PC-9 (cell line): ENCODE measurements at regions of chr1 and their contacts with region 1.

Region 1: DNA sequence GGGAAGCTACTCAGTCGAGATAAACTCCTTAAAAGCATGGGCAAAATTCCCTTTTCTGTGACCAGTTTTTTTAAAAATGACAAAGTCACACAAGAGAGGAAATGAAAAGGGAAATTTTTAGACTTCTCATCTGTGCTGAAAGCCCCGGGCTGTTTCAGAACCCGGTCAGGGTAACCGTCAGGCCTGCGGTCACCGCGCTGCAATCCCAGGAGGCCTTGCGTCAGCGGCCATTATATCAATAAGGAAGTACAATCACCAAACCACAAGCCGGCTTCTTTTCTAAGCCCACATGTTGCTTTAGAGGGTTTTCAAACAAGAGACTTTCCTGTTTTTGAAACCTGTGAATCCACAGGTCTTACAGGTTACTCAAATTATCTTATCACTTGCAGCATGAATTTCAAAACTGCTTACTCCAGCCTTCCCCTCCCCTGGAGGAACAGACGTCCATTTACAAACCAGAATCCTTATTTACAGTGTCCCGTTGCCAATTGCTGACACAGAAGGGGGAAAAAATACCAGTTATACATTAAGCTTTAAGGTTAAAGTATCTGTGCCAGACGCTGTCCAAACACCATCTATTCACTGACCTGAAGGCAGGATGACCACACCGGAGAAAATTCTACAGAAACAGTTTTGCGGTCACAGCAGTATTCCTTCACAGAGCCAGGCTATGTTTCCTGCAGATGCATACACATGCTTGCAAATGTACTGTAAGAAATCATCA is 165.3 kb downstream of the TOMM20 start:
- DNase-seq: peak; percentile 90 to 99
- H3K4me3 ChIP-seq: peak overlapping the region; percentile 38
- H3K27ac ChIP-seq: peak overlapping the region; percentile 99
- H3K4me1 ChIP-seq: peaks cover 84% of the 10 kb centered on the region
- H3K27me3 ChIP-seq: no peaks in the 10 kb centered on the region
- CTCF ChIP-seq: no peak

Region 2: GRCh38 chr1:234564642-234565037 is 398.7 kb before region 1 on chr1:
- CTCF ChIA-PET with region 1: no interaction called
- POLR2A ChIA-PET with region 1: no interaction called
- intact Hi-C with region 1: loop called (anchors 2 kb)
- DNase-seq: peak; percentile 88 to 99
- H3K4me3 ChIP-seq: no peak overlapping the region
- H3K27ac ChIP-seq: peak overlapping the region; percentile 90
- H3K4me1 ChIP-seq: peaks cover 45% of the 10 kb centered on the region
- H3K27me3 ChIP-seq: no peaks in the 10 kb centered on the region
- CTCF ChIP-seq: no peak

Region 3: DNA sequence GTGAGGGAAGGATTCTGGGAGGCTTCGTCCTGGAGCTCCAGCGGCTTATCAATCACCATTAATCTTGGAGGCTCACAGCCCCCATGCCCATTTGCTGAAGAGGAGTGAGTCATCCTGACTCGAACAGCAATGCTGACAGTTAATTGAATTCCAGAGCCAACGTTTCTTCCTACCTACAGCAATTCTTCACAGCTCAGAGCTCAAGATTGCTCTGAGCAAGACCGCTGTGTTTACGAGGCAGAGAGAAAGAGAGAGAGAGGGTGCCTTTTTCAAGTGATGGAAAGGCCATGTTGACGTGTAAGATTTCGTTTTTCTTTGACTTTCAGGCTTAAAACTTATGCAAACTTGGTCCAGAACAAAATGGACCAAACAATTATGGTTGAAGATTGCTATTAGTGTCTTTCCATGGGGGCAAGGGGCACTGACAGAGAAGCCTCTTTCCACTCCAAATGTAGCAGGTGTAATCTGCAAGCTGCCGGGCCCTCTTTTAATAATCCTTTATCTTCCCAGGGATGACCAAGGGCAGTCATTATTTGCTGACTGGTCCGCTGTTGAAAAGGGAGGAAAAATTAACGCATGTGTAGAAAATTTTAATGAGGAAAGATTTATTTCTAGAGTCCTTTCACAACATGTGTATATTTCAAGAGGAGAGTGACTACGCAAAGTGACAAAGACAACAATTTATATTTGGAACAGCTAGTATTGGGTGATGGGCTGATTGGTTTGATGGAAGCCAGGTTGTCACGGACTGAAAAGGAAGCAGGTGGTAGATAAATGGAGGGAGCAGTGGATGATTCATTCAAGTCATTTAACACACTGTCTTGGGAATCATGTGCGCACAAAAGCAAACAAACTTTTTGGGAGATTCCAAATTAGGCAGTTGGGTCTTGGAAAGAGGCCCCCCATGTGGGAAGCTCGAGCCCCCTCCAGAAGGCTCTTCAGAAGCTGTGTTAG is 217.2 kb before region 1 on chr1:
- CTCF ChIA-PET with region 1: no interaction called
- POLR2A ChIA-PET with region 1: no interaction called
- intact Hi-C with region 1: loop called (anchors 1 kb)
- DNase-seq: peak in 1 of 2 experiments; percentile 79
- H3K4me3 ChIP-seq: no peak overlapping the region
- H3K27ac ChIP-seq: peak overlapping the region; percentile 82
- H3K4me1 ChIP-seq: peaks cover 45% of the 10 kb centered on the region
- H3K27me3 ChIP-seq: no peaks in the 10 kb centered on the region
- CTCF ChIP-seq: no peak

Region 4: GRCh38 chr1:234875953-234876855 is 87.1 kb before region 1 on chr1:
- CTCF ChIA-PET with region 1: no interaction called
- POLR2A ChIA-PET with region 1: no interaction called
- intact Hi-C with region 1: loop called (anchors 1 kb)
- DNase-seq: peak; percentile 70 to 98
- H3K4me3 ChIP-seq: peak overlapping the region; percentile 45; the same call in 1 of the 2 replicates
- H3K27ac ChIP-seq: peak overlapping the region; percentile 99
- H3K4me1 ChIP-seq: peaks cover 70% of the 10 kb centered on the region
- H3K27me3 ChIP-seq: no peaks in the 10 kb centered on the region
- CTCF ChIP-seq: no peak

Region 5: GRCh38 chr1:234925440-234926263 is 37.7 kb before region 1 on chr1:
- CTCF ChIA-PET with region 1: interaction called, 3 read pairs
- POLR2A ChIA-PET with region 1: interaction called, 3 read pairs
- intact Hi-C with region 1: loop called (anchors 1 kb)
- DNase-seq: peak; percentile 74 to 99
- H3K4me3 ChIP-seq: no peak overlapping the region
- H3K27ac ChIP-seq: peak overlapping the region; percentile 88
- H3K4me1 ChIP-seq: peaks cover 37% of the 10 kb centered on the region
- H3K27me3 ChIP-seq: no peaks in the 10 kb centered on the region
- CTCF ChIP-seq: no peak

Region 6: DNA sequence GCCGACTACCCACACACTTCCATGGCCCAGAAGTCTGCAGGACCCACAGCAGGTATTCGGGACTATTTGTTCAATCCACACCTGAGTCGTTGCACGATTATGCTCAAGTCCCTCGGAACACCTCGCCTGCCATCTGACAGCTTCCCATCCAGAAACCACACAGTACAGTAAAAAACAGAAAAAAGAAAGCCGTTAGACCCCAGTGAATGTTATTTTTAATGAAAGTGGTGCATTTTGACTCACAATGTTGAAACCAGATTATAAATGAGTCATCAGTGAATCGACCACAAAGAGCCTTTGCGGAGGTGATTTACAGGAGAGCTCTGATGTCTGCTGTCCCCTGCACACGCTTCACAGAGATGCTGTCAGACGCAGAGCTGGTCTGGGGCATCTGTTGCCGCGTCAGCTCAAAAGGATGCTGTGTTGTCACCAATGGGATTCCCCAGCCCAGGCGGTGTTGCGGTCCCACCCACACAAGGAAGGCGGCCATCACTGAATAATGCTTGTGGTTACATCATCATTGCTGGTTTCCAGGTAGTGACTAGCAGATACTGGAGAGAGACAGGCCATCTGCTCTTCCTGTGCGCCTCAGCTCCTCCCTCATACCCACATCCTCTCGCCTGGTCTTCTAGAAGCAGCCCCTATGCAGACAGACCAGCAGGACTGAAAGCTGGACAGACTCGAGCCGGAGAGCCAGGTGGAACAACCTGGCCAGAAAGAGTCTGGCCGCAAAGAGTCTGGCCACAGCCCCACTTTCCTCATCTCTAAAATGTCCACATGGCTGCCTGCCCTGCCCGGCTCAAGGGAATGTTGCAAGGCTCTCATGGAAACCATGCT is 48.5 kb after region 1 on chr1:
- CTCF ChIA-PET with region 1: no interaction called
- POLR2A ChIA-PET with region 1: no interaction called
- intact Hi-C with region 1: loop called (anchors 5 kb)
- DNase-seq: peak; percentile 89 to 98
- H3K4me3 ChIP-seq: peak overlapping the region; percentile 28; the same call in 1 of the 2 replicates
- H3K27ac ChIP-seq: peak overlapping the region; percentile 98
- H3K4me1 ChIP-seq: peaks cover 35% of the 10 kb centered on the region
- H3K27me3 ChIP-seq: no peaks in the 10 kb centered on the region
- CTCF ChIP-seq: no peak

Region 7: DNA sequence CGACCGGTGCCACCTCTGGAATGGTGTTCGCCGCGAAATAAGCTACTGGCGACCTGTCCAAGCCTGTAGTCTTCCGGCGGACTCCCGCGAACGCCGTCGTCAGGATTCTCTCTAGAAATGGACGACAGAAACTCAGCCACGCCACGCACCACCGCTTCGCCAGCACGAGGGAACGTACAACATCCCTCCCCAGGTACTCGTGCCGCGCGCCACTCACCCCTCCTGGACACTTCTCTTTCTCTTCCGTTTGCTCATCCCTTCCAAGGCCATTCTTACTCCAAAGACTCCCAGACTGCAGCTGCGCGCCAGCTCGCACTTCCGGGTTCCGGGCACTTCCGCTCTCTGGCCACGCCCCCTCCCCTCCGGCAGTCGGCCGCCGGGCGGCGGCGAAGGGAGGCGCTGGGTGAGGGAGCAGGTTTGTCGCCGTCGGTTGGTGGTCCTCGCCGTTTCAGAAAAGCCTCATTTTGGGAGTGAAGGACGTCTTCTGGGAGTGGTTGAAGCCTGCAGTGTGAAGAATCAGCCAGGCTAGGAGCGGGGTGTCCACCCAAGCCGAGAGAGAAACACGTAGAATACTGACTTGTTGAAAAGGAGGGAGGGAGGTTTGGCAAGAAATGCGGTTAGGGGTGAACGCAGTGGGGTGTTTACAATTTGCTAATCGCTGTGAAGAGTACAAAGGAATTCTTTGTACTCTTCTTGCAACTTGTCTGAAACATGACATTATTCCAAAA is 197.8 kb after region 1 on chr1 and contains the start of gene RBM34:
- CTCF ChIA-PET with region 1: no interaction called
- POLR2A ChIA-PET with region 1: no interaction called
- intact Hi-C with region 1: loop called (anchors 5 kb)
- DNase-seq: peak; percentile 80 to 95
- H3K4me3 ChIP-seq: peak within 1 kb of the TSS; percentile 73
- H3K27ac ChIP-seq: peak within 1 kb of the TSS; percentile 85
- H3K4me1 ChIP-seq: peaks cover 16% of the 10 kb centered on the region
- H3K27me3 ChIP-seq: no peaks in the 10 kb centered on the region
- CTCF ChIP-seq: no peak
- total RNA-seq, gene RBM34: 101 and 106 TPM in 2 replicates